AG04450 (cell line): ENCODE measurements at regions of chr10 and their contacts with region 1.

Region 1: GRCh38 chr10:32256613-32257437 is 90.1 kb downstream of the EPC1 start:
- DNase-seq: no peak
- H3K4me3 ChIP-seq: no peak overlapping the region
- H3K27ac ChIP-seq: no peak overlapping the region
- H3K27me3 ChIP-seq: no peaks in the 10 kb centered on the region
- CTCF ChIP-seq: peak; percentile 97

Region 2: GRCh38 chr10:31935678-31936077 is 321.1 kb before region 1 on chr10:
- CTCF ChIA-PET with region 1: interaction called, 10 read pairs
- POLR2A ChIA-PET with region 1: no interaction called
- DNase-seq: no peak
- H3K4me3 ChIP-seq: no peak overlapping the region
- H3K27ac ChIP-seq: no peak overlapping the region
- H3K27me3 ChIP-seq: no peaks in the 10 kb centered on the region
- CTCF ChIP-seq: no peak

Region 3: GRCh38 chr10:32207544-32207943 is 49.3 kb before region 1 on chr10:
- CTCF ChIA-PET with region 1: no interaction called
- POLR2A ChIA-PET with region 1: no interaction called
- DNase-seq: no peak
- H3K4me3 ChIP-seq: no peak overlapping the region
- H3K27ac ChIP-seq: no peak overlapping the region
- H3K27me3 ChIP-seq: no peaks in the 10 kb centered on the region
- CTCF ChIP-seq: peak; percentile 61

Region 4: GRCh38 chr10:32245756-32246155 is 11.1 kb before region 1 on chr10:
- CTCF ChIA-PET with region 1: interaction called, 11 read pairs
- POLR2A ChIA-PET with region 1: no interaction called
- DNase-seq: no peak
- H3K4me3 ChIP-seq: no peak overlapping the region
- H3K27ac ChIP-seq: no peak overlapping the region
- H3K27me3 ChIP-seq: no peaks in the 10 kb centered on the region
- CTCF ChIP-seq: no peak

Region 5: DNA sequence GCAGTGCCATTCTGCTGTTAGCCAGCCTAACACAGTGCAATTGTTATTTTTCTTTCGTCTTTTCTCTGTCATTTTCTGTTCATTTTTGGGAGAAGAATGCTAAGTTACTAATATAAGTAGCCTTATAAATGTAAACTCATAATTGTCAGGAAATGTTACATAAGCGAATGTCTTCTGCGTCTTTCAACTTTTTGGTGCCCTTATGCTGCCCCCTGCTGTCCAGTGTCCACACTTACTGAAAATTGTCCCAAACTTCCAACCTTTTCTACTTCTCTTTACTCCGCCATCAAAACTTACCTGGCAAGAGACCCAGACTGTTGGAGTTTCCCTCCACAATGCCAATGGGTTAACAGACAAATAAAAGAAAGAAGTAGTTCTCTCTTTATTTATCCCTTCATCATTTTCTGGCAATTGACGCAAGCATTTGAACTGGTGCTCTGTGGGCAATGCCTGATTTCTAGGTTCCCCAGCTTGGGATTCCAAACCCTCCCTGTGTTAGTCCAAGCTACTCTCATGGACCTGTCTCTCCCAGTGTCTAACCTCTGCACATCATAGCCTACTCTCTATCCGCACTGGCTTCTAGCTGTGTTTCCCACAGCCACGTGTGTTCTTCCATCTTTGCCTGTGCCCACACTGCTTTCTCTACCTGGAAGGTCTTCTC is 111.1 kb after region 1 on chr10:
- CTCF ChIA-PET with region 1: interaction called, 14 read pairs
- POLR2A ChIA-PET with region 1: no interaction called
- DNase-seq: peak; percentile 38
- H3K4me3 ChIP-seq: no peak overlapping the region
- H3K27ac ChIP-seq: no peak overlapping the region
- H3K27me3 ChIP-seq: no peaks in the 10 kb centered on the region
- CTCF ChIP-seq: peak; percentile 76

Region 6: GRCh38 chr10:32995751-32996150 is 738.9 kb after region 1 on chr10:
- CTCF ChIA-PET with region 1: interaction called, 10 read pairs
- POLR2A ChIA-PET with region 1: no interaction called
- DNase-seq: no peak
- H3K4me3 ChIP-seq: no peak overlapping the region
- H3K27ac ChIP-seq: no peak overlapping the region
- H3K27me3 ChIP-seq: no peaks in the 10 kb centered on the region
- CTCF ChIP-seq: no peak